Activated T-helper 1 cell treated with anti-CD3 and anti-CD28 coated beads, Interleukin-12 subunit alpha, Interleukin-12 subunit beta, Interleukin-2, Interleukin-4 antibody, amounts not matched to agents 30 ng/mL and 10 ng/mL and 1 ng/mL, durations not matched to agents 14 hours and 24 hours and 36 hours (primary cell): ENCODE measurements at regions of chr10 and their contacts with region 1.

Region 1: GRCh38 chr10:90871766-90872647 is at the start of gene RPP30:
- DNase-seq: peak; percentile 82
- H3K4me3 Mint-ChIP-seq: peak within 1 kb of the TSS; percentile 97
- H3K27ac Mint-ChIP-seq: peak within 1 kb of the TSS; percentile 91
- H3K4me1 Mint-ChIP-seq: peaks cover 39% of the 10 kb centered on the region
- H3K27me3 Mint-ChIP-seq: peaks cover 29% of the 10 kb centered on the region
- total RNA-seq, gene RPP30: 78.3 and 80.4 TPM in 2 replicates

Region 2: GRCh38 chr10:89643431-89644331 is 1228.3 kb before region 1 on chr10:
- intact Hi-C with region 1: loop called (anchors 10 kb)
- DNase-seq: peak; percentile 68
- H3K4me3 Mint-ChIP-seq: no peak overlapping the region
- H3K27ac Mint-ChIP-seq: no peak overlapping the region
- H3K4me1 Mint-ChIP-seq: peaks cover 7% of the 10 kb centered on the region
- H3K27me3 Mint-ChIP-seq: peaks cover 14% of the 10 kb centered on the region

Region 3: GRCh38 chr10:90148116-90148855 is 723.7 kb before region 1 on chr10:
- intact Hi-C with region 1: loop called (anchors 5 kb)
- DNase-seq: no peak
- H3K4me3 Mint-ChIP-seq: no peak overlapping the region
- H3K27ac Mint-ChIP-seq: no peak overlapping the region
- H3K4me1 Mint-ChIP-seq: no peaks in the 10 kb centered on the region
- H3K27me3 Mint-ChIP-seq: peaks cover 2% of the 10 kb centered on the region

Region 4: GRCh38 chr10:90857635-90858460 is 14.2 kb before region 1 on chr10 and contains the start of gene HTR7:
- intact Hi-C with region 1: loop called (anchors 2 kb)
- DNase-seq: peak; percentile 52
- H3K4me3 Mint-ChIP-seq: peak within 1 kb of the TSS; percentile 82
- H3K27ac Mint-ChIP-seq: no peak within 1 kb of the TSS
- H3K4me1 Mint-ChIP-seq: peaks cover 17% of the 10 kb centered on the region
- H3K27me3 Mint-ChIP-seq: peaks cover 70% of the 10 kb centered on the region
- total RNA-seq, gene HTR7: not detected in 2 replicates

Region 5: DNA sequence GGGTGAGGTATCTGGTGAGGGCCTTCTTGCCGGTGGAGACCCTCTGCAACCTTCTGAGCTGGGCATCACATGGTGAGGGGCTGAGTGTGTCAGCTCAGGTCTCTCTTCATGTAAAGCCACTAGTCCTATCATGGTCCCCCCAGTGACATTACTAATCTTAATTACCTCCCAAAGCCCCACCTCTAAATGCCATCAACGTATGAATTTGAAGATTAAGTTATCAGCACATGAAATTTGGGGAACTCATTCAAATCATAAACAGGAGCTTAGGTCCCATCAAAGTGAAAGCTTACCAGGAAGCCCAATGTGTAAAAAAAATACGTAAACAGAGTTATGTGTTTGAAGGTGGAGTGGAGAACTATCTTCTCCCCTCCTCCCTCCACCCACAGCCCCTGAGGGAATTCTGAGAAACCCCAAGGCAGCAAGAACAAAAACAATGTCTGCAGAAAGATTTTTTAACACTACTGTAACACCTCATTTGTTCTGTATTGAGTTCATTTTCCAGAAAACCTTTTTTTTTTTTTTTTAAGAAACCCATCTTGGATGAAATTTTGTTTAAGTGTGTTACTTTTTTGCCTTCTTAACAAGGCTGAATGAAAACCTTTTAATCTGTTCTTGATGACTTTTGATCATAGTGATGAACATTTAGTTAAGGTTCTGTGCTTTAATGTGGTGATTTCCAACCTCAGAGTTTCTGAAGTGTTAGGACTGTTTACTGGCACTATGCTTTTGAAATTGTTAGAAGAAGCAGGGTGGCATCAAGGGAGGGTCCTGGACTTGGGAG is 329.4 kb after region 1 on chr10:
- intact Hi-C with region 1: loop called (anchors 5 kb)
- DNase-seq: peak; percentile 47
- H3K4me3 Mint-ChIP-seq: peak overlapping the region; percentile 68
- H3K27ac Mint-ChIP-seq: peak overlapping the region; percentile 92
- H3K4me1 Mint-ChIP-seq: peaks cover 81% of the 10 kb centered on the region
- H3K27me3 Mint-ChIP-seq: no peaks in the 10 kb centered on the region

Region 6: DNA sequence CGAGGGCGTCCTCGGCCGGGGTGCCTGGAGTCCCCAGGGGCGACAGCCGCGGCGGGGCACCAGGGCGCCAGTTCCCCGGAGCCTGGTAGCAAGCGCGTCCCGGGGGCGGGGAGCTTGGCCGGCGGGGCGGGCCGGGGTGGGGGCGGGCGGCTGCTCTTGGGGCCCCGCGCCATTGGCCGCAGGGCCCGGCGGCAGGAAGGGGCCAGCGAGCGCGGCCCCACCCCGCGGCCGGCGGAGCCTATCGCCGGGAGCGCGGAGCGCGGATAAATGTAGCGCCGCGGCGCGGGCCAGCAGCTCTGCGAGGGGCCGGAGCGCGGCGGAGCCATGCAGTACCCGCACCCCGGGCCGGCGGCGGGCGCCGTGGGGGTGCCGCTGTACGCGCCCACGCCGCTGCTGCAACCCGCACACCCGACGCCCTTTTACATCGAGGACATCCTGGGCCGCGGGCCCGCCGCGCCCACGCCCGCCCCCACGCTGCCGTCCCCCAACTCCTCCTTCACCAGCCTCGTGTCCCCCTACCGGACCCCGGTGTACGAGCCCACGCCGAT is 1817.7 kb after region 1 on chr10 and contains the start of gene HHEX:
- intact Hi-C with region 1: loop called (anchors 10 kb)
- DNase-seq: no peak
- H3K4me3 Mint-ChIP-seq: peak within 1 kb of the TSS; percentile 73
- H3K27ac Mint-ChIP-seq: peak within 1 kb of the TSS; percentile 55
- H3K4me1 Mint-ChIP-seq: peaks cover 23% of the 10 kb centered on the region
- H3K27me3 Mint-ChIP-seq: peaks cover 82% of the 10 kb centered on the region
- total RNA-seq, gene HHEX: 0.16 and 0.32 TPM in 2 replicates